ENCODE measurements at regions of chr22 and their contacts with region 1.

Region 1: DNA sequence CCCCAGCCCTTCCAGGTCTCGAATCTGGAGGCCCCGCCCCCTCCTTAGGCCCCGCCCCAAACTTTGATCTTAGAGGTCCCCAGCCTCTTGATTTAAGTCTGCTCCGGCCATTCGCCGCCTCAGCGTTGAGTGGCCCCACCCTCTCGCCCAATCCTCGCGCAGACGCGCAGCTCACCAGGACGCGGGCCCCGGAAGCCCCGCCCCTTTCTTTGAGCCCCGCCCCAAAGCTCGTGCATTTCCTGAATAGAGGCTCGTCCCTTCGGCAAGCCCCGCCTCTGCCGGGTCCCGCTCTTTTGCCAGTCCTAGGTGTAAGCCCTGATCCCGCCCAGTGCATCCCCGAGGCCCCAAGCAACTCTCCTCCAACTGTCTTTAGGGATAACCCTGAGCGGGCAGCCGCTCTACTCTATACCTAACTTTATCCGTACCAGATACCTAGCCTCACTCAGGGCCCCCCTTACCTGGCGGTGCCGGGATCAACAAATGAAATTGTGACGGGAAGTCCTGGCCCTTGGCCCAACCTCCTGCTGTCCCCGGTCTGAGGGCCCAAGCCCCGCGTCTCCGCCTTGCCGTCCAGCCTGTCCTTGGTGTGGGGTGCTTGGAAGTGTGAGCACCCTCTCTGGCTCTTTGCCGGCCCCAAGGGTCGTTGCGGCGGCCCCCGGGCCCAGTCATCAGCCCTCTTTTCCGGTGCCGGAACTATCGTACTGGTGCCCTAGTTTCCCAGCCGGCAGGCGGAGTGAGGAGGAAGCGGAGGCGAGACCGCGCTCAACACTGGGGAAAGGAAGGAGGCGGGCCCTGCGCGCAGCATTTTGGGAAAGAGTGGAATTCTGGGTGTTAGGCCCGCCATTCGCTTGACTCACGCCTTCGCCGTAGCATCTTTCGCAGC is at the start of gene SNRPD3:
- DNase-seq: peak; percentile 100
- ATAC-seq: peak; percentile 91
- H3K4me3 Mint-ChIP-seq: peak within 1 kb of the TSS; percentile 95
- H3K27ac Mint-ChIP-seq: peak within 1 kb of the TSS; percentile 99
- H3K4me1 Mint-ChIP-seq: peaks cover 53% of the 10 kb centered on the region
- H3K27me3 Mint-ChIP-seq: no peaks in the 10 kb centered on the region
- total RNA-seq, gene SNRPD3: 156 to 232 TPM

Region 2: GRCh38 chr22:23786752-23787599 is 768.4 kb before region 1 on chr22 and contains the start of gene SMARCB1:
- CTCF ChIA-PET with region 1: no interaction called
- POLR2A ChIA-PET with region 1: no interaction called
- intact Hi-C with region 1: loop called in 1 of 2 experiments (anchors 2 kb)
- DNase-seq: peak; percentile 96
- ATAC-seq: peak; percentile 81
- H3K4me3 Mint-ChIP-seq: peak within 1 kb of the TSS; percentile 84
- H3K27ac Mint-ChIP-seq: peak within 1 kb of the TSS; percentile 94
- H3K4me1 Mint-ChIP-seq: peaks cover 30% of the 10 kb centered on the region
- H3K27me3 Mint-ChIP-seq: no peaks in the 10 kb centered on the region
- total RNA-seq, gene SMARCB1: 78.2 to 95.2 TPM

Region 3: DNA sequence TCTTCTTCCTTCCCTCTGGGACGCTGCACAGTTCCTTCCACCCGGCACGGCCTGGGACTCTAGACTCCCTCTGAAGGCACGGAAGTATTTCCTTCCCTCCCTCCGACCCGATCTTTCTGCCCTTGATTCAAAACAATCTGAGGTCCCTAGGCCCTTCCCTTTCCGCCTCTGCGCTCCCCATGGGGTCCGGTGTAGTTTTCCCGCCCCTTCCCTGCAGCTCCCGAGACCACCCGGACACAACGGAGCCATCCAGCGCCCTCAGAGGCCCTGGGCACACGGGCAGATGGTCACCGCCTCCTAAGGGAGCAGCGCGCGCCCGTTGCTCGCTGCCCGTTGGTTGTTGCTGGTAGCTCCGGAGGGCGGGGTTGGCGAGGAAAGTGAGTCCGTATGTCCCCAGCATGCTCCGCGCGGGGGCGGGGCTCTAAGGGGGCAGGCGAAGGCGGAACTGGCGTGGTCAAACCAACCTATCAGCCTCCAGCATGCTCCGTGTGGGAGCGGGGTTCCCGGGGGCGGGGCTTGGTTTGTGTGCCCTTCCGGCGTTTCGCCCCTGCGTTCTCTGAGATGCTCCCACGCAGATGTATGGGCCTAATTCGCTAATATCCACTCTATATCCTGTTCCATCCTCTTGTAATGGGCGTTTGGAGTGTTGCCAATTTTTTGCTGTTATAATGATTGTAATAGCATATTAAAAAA is 641.6 kb before region 1 on chr22:
- CTCF ChIA-PET with region 1: no interaction called
- POLR2A ChIA-PET with region 1: interaction called, 3 read pairs
- intact Hi-C with region 1: loop called in 1 of 2 experiments (anchors 1 kb)
- DNase-seq: peak; percentile 100
- ATAC-seq: peak; percentile 99
- H3K4me3 Mint-ChIP-seq: peak overlapping the region; percentile 85
- H3K27ac Mint-ChIP-seq: peak overlapping the region; percentile 98
- H3K4me1 Mint-ChIP-seq: peaks cover 23% of the 10 kb centered on the region
- H3K27me3 Mint-ChIP-seq: no peaks in the 10 kb centered on the region

Region 4: GRCh38 chr22:24156913-24157821 is 398.2 kb before region 1 on chr22:
- CTCF ChIA-PET with region 1: no interaction called
- POLR2A ChIA-PET with region 1: no interaction called
- intact Hi-C with region 1: loop called in 1 of 2 experiments (anchors 1 kb)
- DNase-seq: peak; percentile 92
- ATAC-seq: peak; percentile 76
- H3K4me3 Mint-ChIP-seq: peak overlapping the region; percentile 79
- H3K27ac Mint-ChIP-seq: peak overlapping the region; percentile 75
- H3K4me1 Mint-ChIP-seq: peaks cover 59% of the 10 kb centered on the region
- H3K27me3 Mint-ChIP-seq: no peaks in the 10 kb centered on the region

Region 5: DNA sequence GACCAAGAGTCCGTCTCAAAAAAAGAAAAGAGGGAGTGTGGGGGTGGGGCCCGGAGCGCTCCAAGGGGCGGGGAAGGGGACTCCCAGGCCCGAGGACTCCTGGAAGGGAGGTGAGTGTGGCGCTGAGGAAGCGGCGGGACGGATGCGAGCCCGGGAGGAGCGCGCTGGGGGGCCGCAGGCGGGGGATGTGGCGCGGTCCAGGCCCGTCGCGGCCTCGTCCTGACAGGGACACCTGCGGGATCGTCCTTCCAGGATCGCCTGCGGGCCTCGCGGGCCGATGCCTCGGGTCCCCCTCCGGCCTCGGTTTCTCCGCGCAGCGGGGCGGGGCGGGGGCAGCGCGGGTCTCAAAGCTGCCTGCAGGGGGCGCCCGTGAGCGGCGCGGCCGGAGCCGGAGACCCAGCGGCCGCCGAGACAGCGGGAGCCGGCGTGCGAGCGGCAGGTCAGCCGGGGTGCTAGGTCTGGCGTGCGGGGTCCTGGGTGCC is 131.8 kb before region 1 on chr22:
- CTCF ChIA-PET with region 1: no interaction called
- POLR2A ChIA-PET with region 1: interaction called, 4 read pairs
- intact Hi-C with region 1: loop called in 1 of 2 experiments (anchors 1 kb)
- DNase-seq: peak; percentile 81
- ATAC-seq: peak; percentile 24
- H3K4me3 Mint-ChIP-seq: peak overlapping the region; percentile 94
- H3K27ac Mint-ChIP-seq: no peak overlapping the region
- H3K4me1 Mint-ChIP-seq: peaks cover 25% of the 10 kb centered on the region
- H3K27me3 Mint-ChIP-seq: peaks cover 3% of the 10 kb centered on the region

Region 6: DNA sequence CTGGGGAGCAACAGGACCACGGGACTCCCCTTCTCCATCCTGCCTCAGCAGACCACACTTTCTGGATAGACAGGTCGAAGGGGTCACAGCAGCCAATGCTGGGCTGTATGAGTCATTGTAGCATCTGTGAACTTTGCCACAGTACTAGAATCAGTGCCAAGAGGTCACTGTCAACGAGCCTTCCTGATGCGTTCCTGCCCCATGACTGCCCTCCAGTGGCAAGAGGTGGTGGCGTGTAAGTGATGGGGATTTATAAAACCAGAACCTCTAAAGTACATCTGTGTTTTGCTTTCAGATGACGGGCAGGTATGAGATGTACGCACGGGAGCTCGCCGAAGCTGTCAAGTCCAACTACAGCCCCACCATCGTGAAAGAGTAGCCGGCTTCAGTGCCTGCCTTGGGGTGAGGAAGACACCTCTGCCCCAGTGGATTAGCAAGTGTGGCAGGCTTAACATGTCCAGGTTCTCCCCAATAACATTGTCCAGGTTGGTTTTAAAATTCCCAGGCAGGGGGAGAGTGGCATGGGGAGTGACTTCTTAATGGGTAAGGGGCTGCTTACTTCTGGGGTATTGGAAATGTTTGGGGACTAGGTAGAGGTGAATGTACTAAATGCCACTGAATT is 29.9 kb before region 1 on chr22:
- CTCF ChIA-PET with region 1: interaction called, 4 read pairs
- POLR2A ChIA-PET with region 1: interaction called, 4 read pairs
- intact Hi-C with region 1: loop called in 1 of 2 experiments (anchors 1 kb)
- DNase-seq: peak; percentile 90
- ATAC-seq: peak; percentile 92
- H3K4me3 Mint-ChIP-seq: no peak overlapping the region
- H3K27ac Mint-ChIP-seq: no peak overlapping the region
- H3K4me1 Mint-ChIP-seq: peaks cover 8% of the 10 kb centered on the region
- H3K27me3 Mint-ChIP-seq: no peaks in the 10 kb centered on the region

Region 7: DNA sequence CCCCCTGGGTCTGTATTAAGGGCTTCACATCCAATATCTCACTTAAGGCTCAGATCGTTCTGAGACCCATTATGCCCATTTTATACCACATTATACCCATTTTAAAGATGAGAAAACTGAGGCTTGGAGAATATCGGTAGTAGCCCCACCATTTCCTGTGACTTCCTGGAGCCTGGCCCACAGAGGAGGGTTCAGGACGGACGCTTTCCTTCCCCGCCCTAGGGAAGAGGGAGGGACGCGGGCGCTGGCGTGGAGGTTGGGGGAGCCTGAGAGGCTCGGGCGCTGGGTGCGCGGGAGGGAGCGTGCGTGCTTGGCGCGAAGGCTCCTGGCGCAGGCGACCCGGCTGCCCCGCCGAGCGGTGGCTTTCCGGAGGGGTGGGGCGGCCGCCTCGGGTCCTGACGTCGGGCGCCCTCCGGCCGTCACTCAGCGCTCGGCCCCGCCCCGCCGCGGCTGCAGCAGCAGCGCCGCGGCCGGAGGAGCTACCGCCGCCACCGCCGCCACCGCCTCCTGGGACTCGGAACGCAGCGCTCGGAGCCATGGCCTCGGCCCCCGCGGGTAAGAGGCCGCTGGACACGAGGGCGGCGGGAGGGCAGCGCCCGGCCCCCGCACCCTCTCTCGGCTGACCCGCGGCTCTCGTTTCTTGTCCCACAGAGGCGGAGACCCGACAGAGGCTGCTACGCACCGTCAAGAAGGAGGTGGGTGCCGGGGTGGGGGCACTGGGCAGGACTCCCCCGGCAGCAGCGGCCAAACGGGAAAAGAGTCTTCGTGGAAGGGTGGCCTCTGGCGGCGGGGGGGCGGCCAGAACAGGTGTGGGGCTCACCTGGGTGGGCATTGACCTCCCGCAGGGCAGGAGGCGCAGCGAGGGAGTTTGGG is 250.6 kb after region 1 on chr22 and contains the start of gene SGSM1:
- CTCF ChIA-PET with region 1: no interaction called
- POLR2A ChIA-PET with region 1: no interaction called
- intact Hi-C with region 1: loop called in 1 of 2 experiments (anchors 1 kb)
- DNase-seq: peak; percentile 89
- ATAC-seq: peak; percentile 88
- H3K4me3 Mint-ChIP-seq: peak within 1 kb of the TSS; percentile 52
- H3K27ac Mint-ChIP-seq: peak within 1 kb of the TSS; percentile 27
- H3K4me1 Mint-ChIP-seq: peaks cover 26% of the 10 kb centered on the region
- H3K27me3 Mint-ChIP-seq: peaks cover 2% of the 10 kb centered on the region
- total RNA-seq, gene SGSM1: 0.11 to 0.35 TPM

Region 8: DNA sequence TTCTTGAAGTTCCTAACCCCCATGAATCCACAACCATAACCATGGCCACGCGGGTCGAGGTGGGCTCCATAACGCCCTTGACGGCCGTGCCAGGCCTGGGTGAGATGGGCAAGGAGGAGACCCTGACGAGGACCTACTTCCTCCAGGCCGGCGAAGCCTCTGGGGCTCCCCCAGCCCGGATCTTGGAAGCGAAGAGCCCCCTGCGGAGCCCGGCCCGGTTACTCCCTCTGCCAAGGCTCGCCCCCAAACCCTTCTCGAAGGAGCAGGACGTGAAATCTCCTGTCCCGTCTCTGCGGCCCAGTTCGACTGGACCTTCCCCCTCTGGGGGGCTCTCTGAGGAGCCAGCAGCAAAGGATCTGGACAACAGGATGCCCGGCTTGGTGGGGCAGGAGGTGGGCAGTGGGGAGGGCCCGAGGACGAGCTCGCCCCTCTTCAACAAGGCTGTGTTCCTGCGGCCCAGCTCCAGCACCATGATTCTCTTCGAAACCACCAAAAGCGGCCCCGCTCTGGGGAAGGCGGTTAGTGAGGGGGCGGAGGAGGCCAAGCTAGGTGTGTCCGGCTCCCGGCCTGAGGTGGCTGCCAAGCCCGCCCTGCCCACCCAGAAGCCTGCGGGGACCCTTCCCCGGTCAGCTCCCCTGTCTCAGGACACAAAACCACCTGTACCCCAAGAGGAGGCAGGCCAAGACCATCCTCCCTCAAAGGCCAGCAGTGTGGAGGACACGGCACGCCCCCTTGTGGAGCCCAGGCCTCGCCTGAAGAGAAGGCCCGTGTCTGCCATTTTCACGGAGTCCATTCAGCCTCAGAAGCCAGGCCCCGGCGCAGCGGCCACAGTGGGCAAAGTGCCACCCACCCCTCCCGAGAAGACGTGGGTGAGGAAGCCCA is 472.8 kb after region 1 on chr22:
- CTCF ChIA-PET with region 1: no interaction called
- POLR2A ChIA-PET with region 1: no interaction called
- intact Hi-C with region 1: no loop called
- DNase-seq: peak; percentile 57
- ATAC-seq: no peak
- H3K4me3 Mint-ChIP-seq: no peak overlapping the region
- H3K27ac Mint-ChIP-seq: no peak overlapping the region
- H3K4me1 Mint-ChIP-seq: peaks cover 10% of the 10 kb centered on the region
- H3K27me3 Mint-ChIP-seq: peaks cover 3% of the 10 kb centered on the region

Measured in activated CD4-positive, alpha-beta T cell treated with anti-CD3 and anti-CD28 coated beads for 36 hours (primary cell).